ENCODE measurements at regions of chr10 and their contacts with region 1.

Region 1: DNA sequence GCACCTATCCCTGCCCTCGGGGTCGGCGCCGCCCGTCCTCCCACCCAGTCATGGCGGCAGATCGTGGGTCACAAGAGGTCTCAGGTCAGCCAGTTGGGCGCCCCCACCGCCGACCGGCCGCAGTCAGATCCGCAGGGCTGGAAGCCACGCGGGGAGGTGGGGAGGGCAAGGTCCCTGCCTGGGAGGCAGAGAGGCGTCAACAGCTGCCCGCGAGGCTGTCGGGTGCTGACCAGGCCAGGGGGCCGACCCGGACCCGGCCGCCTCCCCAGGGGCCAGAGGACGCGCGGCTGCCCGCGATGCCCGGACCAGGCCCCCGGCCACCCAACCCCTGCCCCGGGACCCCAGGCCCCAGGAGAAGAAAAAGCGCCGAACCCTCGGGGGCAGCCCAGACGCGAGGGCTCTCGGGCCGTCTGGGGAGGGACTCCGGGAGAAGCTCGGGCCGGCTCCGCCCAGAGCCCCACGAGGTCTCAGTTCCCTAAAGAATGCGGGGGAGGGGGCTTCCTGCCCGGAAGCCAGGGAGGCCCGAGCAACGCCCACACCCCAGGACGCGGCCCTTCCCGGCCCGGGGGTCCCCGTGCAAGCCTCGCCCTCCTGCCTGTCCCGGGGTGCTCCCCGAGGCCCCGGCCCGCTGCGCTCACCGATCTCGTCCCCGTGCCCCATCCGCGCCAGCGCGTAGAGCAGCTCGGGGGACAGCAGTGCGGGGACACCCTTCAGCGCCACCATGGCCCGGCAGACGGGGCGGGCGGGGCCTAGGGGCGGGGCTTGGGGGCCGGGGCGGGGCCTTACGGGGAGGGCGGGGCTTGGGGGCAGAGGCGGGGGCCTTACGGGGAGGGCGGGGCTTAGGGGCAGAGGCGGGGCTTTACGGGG is at the start of gene FUOM:
- DNase-seq: peak; percentile 52
- H3K4me3 ChIP-seq: peak within 1 kb of the TSS; percentile 27 to 63 (median 52)
- H3K27ac ChIP-seq: no peak within 1 kb of the TSS
- H3K4me1 ChIP-seq: peaks cover 3% of the 10 kb centered on the region
- H3K27me3 ChIP-seq: no peaks in the 10 kb centered on the region
- CTCF ChIP-seq: no peak
- POLR2A ChIP-seq: no peak
- total RNA-seq, gene FUOM: 16.2 and 17.4 TPM in 2 replicates

Region 2: DNA sequence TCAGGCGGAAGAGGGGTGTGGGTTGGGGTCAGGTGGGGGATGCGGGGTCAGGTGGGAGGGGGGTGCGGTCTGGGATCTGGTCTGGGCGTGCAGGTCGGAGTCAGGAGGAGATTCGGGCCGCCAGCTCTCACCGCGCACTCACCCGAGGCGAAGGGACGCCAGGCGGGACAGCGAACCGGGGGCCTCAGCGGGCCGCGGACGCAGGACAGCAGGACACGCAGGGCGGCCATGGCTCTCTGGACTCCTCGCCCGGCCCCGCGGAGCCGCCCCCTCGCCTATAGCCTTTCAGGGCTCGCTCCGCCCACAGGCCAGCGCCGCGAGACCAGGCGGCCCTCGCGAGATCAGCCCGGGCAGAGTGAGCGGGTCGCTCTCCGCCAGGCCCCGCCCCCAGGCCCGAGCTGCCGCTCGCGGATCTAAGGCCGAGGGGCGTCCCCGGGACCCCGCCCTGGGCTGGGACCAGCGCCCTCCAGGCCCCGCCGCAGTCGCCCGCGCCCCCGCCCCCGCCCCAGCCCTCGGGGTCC is 15.6 kb after region 1 on chr10 and contains the start of gene ECHS1:
- CTCF ChIA-PET with region 1: interaction called, 3 read pairs
- POLR2A ChIA-PET with region 1: interaction called, 4 read pairs
- dilution Hi-C with region 1: no loop called
- intact Hi-C with region 1: loop called (anchors 1 kb)
- DNase-seq: peak; percentile 93
- H3K4me3 ChIP-seq: peak within 1 kb of the TSS; percentile 53 to 100 (median 69)
- H3K27ac ChIP-seq: peak within 1 kb of the TSS; percentile 74
- H3K4me1 ChIP-seq: peaks cover 9% of the 10 kb centered on the region
- H3K27me3 ChIP-seq: no peaks in the 10 kb centered on the region
- CTCF ChIP-seq: no peak
- POLR2A ChIP-seq: peak; percentile 91
- total RNA-seq, gene ECHS1: 91.9 and 108 TPM in 2 replicates

Measured in endothelial cell of umbilical vein (primary cell).